ENCODE measurements at regions of chr2 and their contacts with region 1.

Region 1: GRCh38 chr2:172693037-172693436 is 42.6 kb upstream of the RAPGEF4 start:
- DNase-seq: peak; percentile 99
- ATAC-seq: peak; percentile 89
- H3K4me3 ChIP-seq: no peak overlapping the region
- H3K27ac ChIP-seq: no peak overlapping the region
- H3K4me1 ChIP-seq: peaks cover 10% of the 10 kb centered on the region
- H3K27me3 ChIP-seq: no peaks in the 10 kb centered on the region
- CTCF ChIP-seq: no peak
- POLR2A ChIP-seq: no peak; the same call in 1 of the 2 replicates
- RAD21 ChIP-seq: peak; percentile 28

Region 2: DNA sequence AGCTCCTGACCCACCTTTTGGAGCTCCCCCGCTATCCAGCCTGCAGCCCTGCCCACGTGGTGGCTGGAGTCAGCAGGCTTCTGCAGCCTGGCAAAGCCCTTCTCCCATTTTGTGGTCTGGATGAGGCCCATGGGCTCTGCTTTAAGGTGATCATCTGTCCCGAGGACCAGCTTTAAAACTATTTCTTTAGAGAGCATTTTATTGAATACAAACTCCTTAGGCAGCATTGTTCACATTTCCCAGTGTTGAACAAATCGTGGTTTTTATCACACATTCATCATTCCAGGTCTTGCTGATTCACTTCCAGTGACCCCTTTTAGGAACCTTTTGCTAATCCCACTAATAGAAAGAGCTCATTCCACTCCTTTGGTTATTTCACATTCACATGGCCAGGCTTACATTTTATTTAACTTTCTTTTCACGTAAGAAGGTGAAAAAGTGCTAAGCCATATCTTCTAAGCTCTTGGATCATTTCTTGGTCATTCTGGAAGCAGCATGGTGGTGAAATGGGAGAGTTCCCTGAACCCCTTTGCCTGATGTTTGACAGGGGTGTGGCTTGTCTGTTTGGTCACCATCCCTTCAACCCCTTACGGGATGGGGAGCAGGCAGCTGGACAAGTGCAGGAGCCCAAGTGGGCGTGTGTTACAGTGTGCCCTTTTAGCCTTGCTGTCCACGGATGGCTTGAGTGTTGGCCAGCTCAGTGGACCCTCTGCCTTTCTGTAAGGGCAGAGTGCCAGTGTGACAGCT is 37.8 kb before region 1 on chr2:
- CTCF ChIA-PET with region 1: interaction called, 3 read pairs
- POLR2A ChIA-PET with region 1: no interaction called
- dilution Hi-C with region 1: no loop called
- in situ Hi-C with region 1: no loop called
- intact Hi-C with region 1: loop called (anchors 2 kb)
- DNase-seq: peak; percentile 96
- ATAC-seq: peak; percentile 91
- H3K4me3 ChIP-seq: no peak overlapping the region
- H3K27ac ChIP-seq: peak overlapping the region; percentile 89
- H3K4me1 ChIP-seq: peaks cover 9% of the 10 kb centered on the region
- H3K27me3 ChIP-seq: no peaks in the 10 kb centered on the region
- CTCF ChIP-seq: no peak
- POLR2A ChIP-seq: no peak
- RAD21 ChIP-seq: no peak